Esophagus squamous epithelium (tissue), 5 donors: ENCODE measurements at regions of chr20 and their contacts with region 1.

Region 1: DNA sequence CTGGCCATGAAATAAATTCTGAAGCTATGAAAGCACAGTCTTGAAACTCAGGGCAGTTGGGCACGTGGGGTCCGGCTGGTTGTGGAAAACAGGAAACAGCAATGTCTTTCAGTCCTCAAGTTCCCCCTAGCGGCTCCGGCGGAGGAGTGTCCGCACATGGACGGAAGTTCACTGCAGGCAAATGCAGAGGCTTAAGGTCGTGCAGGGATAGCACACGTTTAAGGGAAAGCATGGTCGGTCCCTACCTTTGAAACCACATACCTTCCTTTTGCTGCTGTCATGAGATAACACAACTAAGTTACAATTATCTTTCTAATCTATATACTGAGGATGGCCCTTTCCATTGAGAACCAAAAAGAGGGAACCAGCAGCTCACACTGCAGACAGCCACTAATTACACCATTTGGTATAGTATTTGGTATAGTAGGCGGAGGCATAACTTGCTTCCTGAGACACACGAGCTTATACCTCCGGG is 52.6 kb upstream of the NFATC2 start:
- DNase-seq: peak; percentile 46
- H3K4me3 ChIP-seq: no peak overlapping the region
- H3K27ac ChIP-seq: peak overlapping the region in 3 of 4 donors; percentile 21 to 63 (median 44)
- H3K4me1 ChIP-seq: peaks cover 0 to 25% (median 15%) of the 10 kb centered on the region in 3 donors
- H3K27me3 ChIP-seq: no peaks in the 10 kb centered on the region
- CTCF ChIP-seq: peak; percentile 85 to 93 (median 86)
- POLR2A ChIP-seq: no peak

Region 2: DNA sequence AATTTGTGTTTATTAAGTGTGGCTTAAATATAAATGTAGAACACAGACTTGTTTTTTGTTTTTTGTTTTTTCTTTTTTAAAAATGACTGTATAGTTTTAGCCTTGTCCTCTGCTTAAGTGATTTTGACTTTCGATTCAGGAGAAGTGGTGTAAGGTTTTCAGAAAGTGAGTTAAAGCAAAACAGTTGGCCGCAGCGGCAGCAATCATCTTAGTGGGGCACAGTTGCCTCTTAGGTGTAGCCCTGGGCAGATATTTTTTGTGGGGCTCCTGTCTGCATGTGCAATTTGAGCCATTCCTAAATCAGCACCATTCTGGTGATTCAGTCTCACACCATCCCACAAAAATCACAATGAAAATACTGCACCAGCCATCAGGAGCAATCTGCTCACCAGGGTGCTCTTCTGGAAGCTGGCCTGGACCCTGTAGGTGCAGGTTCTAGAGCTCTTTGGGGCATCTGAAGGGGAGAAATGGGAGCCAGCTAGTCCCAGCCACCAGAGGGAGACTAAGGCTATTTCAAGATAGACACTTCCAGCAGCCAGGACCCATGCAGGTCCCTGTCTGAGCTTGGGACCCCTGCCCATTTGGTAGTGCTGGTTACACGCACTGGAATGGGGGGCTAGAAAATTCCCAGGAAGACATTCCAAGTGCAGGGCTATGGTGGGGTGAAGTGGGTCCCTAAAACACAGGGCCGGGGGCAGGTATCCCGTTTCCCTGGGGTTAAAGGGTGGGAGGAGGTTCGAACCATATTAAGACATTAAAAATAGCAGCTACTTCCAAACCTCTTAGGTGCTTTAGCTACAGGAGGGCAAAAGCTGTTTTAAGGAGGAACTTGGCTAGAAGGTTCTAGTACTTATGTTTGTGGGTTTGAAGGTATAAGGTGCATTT is 209.2 kb before region 1 on chr20:
- intact Hi-C with region 1: loop called (anchors 5 kb)
- DNase-seq: no peak
- H3K4me3 ChIP-seq: no peak overlapping the region
- H3K27ac ChIP-seq: no peak overlapping the region
- H3K4me1 ChIP-seq: peaks cover 24 to 56% (median 32%) of the 10 kb centered on the region in 3 donors
- H3K27me3 ChIP-seq: no peaks in the 10 kb centered on the region
- CTCF ChIP-seq: peak; percentile 35 to 59 (median 44)
- POLR2A ChIP-seq: no peak

Region 3: DNA sequence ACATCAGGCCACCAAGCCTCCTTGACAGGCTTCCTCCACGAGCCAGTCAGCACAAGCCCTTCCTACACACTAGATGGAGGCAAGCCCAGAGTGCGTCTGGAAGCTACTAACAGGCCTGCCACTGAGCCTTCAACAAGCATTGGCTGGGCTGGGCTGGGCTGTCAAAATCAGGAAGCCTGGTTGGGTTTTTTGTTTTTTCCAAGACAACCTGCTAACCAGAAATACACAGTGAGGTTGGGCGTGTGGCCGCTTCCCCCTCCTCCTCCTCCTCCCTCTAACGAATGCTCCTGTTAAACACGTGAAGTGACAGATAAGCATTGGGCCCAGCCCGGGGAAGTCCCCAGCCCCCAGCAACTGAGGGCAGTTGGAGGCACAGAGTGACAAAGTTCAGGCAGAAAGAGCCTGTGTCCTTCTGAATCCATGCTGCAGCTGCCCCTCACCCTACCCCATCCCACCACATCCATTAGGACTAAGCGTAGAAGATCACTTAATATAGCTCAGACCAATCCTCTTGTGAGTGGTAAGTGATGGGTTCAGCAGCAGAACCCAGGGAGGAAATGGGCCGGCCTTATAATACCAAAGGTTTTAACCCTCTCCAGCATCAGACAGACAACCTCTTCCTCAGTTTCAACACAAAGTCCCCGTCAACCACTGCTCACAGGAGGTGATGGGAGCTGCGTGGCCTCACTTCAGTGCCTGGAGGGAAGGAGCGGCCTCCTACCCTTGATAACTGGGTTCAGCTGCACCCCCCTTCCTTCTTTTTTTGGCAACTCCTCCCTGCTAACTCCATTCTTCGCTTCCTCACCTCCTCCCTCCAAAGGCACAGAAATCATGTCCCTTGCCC is 53.7 kb before region 1 on chr20:
- intact Hi-C with region 1: no loop called
- DNase-seq: no peak
- H3K4me3 ChIP-seq: peak overlapping the region; percentile 35 to 70 (median 51)
- H3K27ac ChIP-seq: peak overlapping the region; percentile 71 to 85 (median 76)
- H3K4me1 ChIP-seq: peaks cover 16 to 53% (median 24%) of the 10 kb centered on the region in 3 donors
- H3K27me3 ChIP-seq: peaks cover 0 to 29% (median 0%) of the 10 kb centered on the region in 4 donors
- CTCF ChIP-seq: no peak
- POLR2A ChIP-seq: no peak